H1 (cell line): ENCODE measurements at regions of chr20 and their contacts with region 1.

Region 1: DNA sequence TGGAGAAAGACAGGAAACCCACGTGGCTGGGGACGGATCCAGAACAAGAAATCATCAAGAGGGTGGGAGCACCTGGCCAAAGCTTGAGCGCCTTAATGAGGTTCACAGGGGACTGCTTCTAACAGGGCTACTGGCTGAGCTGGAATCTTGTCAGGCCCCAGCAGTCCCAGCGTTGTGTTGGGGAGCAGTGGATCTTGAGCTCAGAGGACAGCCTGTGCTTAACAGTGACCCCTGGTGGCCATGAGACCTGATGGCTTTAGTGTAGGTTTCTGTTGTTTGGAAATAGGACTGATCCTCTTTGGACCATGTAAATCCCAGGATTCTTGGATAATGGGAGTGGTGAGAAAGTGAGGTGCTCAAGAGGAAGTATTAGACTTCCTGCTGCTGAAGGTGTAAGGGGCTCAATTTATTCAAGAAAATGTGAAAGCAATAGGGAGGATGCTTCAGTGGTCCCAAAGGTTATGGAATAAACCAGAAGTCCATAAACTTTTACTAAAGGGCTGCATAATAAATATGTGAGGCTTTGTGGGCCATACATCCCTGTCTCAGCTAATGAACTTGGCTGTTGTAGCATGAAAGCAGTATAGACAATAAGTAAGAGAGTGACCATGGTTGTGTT is 216.2 kb downstream of the NFATC2 start:
- DNase-seq: peak in 1 of 2 experiments; percentile 79
- H3K4me3 ChIP-seq: no peak overlapping the region
- H3K27ac ChIP-seq: no peak overlapping the region
- H3K4me1 ChIP-seq: peaks cover 0 to 4% (median 1%) of the 10 kb centered on the region in 4 experiments; a peak in 3 of 7 replicates
- H3K27me3 ChIP-seq: no peaks in the 10 kb centered on the region; a peak in 1 of 7 replicates
- CTCF ChIP-seq: peak; percentile 74 to 92 (median 74)
- EP300 ChIP-seq: no peak
- POLR2A ChIP-seq: no peak
- RAD21 ChIP-seq: peak; percentile 70 to 83

Region 2: DNA sequence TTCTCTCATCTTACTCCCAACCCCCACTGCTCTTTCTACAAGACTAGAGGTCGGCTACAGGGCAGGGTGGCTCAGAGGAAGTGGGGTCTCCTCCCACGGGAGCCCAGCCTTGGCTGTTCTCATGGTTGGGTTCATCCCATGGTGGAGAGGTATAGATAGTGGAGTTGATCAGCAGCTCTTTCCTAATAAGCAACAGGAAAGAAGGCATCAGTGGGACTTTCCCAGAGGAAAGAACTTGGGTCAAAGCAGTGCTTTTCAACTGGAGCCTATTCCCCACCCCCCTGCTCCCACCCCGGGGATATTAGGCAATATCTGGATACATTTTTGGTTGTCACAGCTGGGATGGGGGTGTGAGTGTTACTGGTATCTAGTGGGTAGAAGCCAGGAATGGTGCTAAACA is 15.3 kb after region 1 on chr20:
- CTCF ChIA-PET with region 1: interaction called, 15 read pairs
- POLR2A ChIA-PET with region 1: no interaction called
- DNase-seq: no peak
- H3K4me3 ChIP-seq: no peak overlapping the region
- H3K27ac ChIP-seq: no peak overlapping the region
- H3K4me1 ChIP-seq: no peaks in the 10 kb centered on the region
- H3K27me3 ChIP-seq: no peaks in the 10 kb centered on the region; a peak in 1 of 7 replicates
- CTCF ChIP-seq: no peak
- EP300 ChIP-seq: no peak
- POLR2A ChIP-seq: no peak
- RAD21 ChIP-seq: no peak

Region 3: GRCh38 chr20:51354769-51355319 is 28.5 kb after region 1 on chr20:
- CTCF ChIA-PET with region 1: interaction called, 12 read pairs
- POLR2A ChIA-PET with region 1: no interaction called
- DNase-seq: no peak
- H3K4me3 ChIP-seq: no peak overlapping the region
- H3K27ac ChIP-seq: no peak overlapping the region
- H3K4me1 ChIP-seq: no peaks in the 10 kb centered on the region
- H3K27me3 ChIP-seq: no peaks in the 10 kb centered on the region
- CTCF ChIP-seq: no peak
- EP300 ChIP-seq: no peak
- POLR2A ChIP-seq: no peak
- RAD21 ChIP-seq: no peak

Region 4: GRCh38 chr20:51440589-51440988 is 114.3 kb after region 1 on chr20:
- CTCF ChIA-PET with region 1: no interaction called
- POLR2A ChIA-PET with region 1: no interaction called
- DNase-seq: no peak
- H3K4me3 ChIP-seq: no peak overlapping the region
- H3K27ac ChIP-seq: no peak overlapping the region
- H3K4me1 ChIP-seq: peaks cover 0 to 5% (median 0%) of the 10 kb centered on the region in 4 experiments; a peak in 2 of 7 replicates
- H3K27me3 ChIP-seq: no peaks in the 10 kb centered on the region
- CTCF ChIP-seq: no peak
- EP300 ChIP-seq: no peak
- POLR2A ChIP-seq: no peak
- RAD21 ChIP-seq: no peak